ENCODE measurements at regions of chr13 and their contacts with region 1.

Region 1: DNA sequence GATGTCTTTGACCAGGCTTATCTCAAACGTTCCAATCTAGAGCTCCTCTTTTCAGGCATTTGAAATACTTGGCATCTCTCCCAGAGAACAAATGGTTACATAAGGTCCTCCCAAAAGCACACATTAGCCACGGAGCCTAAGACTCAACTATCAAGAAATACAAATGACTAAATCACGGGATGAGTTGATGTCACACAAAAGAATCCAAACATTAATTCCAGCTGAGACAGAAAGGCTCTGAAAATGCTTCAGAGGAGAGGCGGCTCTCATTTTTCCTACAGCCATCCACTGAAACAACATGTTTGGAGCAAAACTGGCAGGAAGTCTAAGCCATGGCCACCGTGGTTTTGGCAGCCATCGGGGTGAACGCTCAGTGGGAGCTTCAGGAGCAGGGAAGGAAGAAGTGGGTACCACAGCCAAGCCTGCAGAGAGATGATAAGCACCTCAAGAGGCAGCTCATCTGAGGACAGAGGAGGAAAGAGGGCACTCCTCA is 122.5 kb downstream of the STK24 start:
- DNase-seq: no peak
- H3K4me3 ChIP-seq: no peak overlapping the region
- H3K27ac ChIP-seq: peak overlapping the region; percentile 62 to 63
- H3K4me1 ChIP-seq: peaks cover 2 to 26% of the 10 kb centered on the region in 2 donors
- H3K27me3 ChIP-seq: no peaks in the 10 kb centered on the region
- CTCF ChIP-seq: no peak

Region 2: GRCh38 chr13:98576963-98577822 is 122.8 kb after region 1 on chr13 and contains the start of gene STK24:
- intact Hi-C with region 1: loop called (anchors 5 kb)
- DNase-seq: peak in 1 of 2 donors; percentile 77
- H3K4me3 ChIP-seq: peak within 1 kb of the TSS; percentile 88 to 89
- H3K27ac ChIP-seq: peak within 1 kb of the TSS; percentile 98 to 99
- H3K4me1 ChIP-seq: peaks cover 0 to 24% of the 10 kb centered on the region in 2 donors
- H3K27me3 ChIP-seq: no peaks in the 10 kb centered on the region
- CTCF ChIP-seq: no peak
- total RNA-seq, gene STK24: 35.4 TPM